ENCODE measurements at regions of chr9 and their contacts with region 1.

Region 1: GRCh38 chr9:110623462-110624025 is 44.0 kb upstream of the SVEP1 start:
- DNase-seq: no peak
- H3K4me3 Mint-ChIP-seq: no peak overlapping the region
- H3K27ac Mint-ChIP-seq: no peak overlapping the region
- H3K4me1 Mint-ChIP-seq: peaks cover 10% of the 10 kb centered on the region
- H3K27me3 Mint-ChIP-seq: peaks cover 7% of the 10 kb centered on the region

Region 2: GRCh38 chr9:109880277-109881169 is 743.0 kb before region 1 on chr9:
- intact Hi-C with region 1: loop called (anchors 10 kb)
- DNase-seq: peak; percentile 20
- H3K4me3 Mint-ChIP-seq: peak overlapping the region; percentile 41
- H3K27ac Mint-ChIP-seq: no peak overlapping the region
- H3K4me1 Mint-ChIP-seq: peaks cover 31% of the 10 kb centered on the region
- H3K27me3 Mint-ChIP-seq: peaks cover 5% of the 10 kb centered on the region

Region 3: GRCh38 chr9:110183208-110184145 is 440.1 kb before region 1 on chr9:
- intact Hi-C with region 1: loop called (anchors 1 kb)
- DNase-seq: peak; percentile 28
- H3K4me3 Mint-ChIP-seq: no peak overlapping the region
- H3K27ac Mint-ChIP-seq: no peak overlapping the region
- H3K4me1 Mint-ChIP-seq: peaks cover 15% of the 10 kb centered on the region
- H3K27me3 Mint-ChIP-seq: no peaks in the 10 kb centered on the region

Region 4: GRCh38 chr9:110427497-110428104 is 195.9 kb before region 1 on chr9:
- intact Hi-C with region 1: loop called (anchors 2 kb)
- DNase-seq: peak; percentile 13
- H3K4me3 Mint-ChIP-seq: no peak overlapping the region
- H3K27ac Mint-ChIP-seq: no peak overlapping the region
- H3K4me1 Mint-ChIP-seq: no peaks in the 10 kb centered on the region
- H3K27me3 Mint-ChIP-seq: no peaks in the 10 kb centered on the region

Region 5: GRCh38 chr9:110452227-110452801 is 171.2 kb before region 1 on chr9:
- intact Hi-C with region 1: loop called (anchors 1 kb)
- DNase-seq: no peak
- H3K4me3 Mint-ChIP-seq: no peak overlapping the region
- H3K27ac Mint-ChIP-seq: no peak overlapping the region
- H3K4me1 Mint-ChIP-seq: no peaks in the 10 kb centered on the region
- H3K27me3 Mint-ChIP-seq: peaks cover 1% of the 10 kb centered on the region

Region 6: GRCh38 chr9:110579034-110579861 is 44.3 kb before region 1 on chr9 and contains the start of gene SVEP1:
- intact Hi-C with region 1: no loop called
- DNase-seq: no peak
- H3K4me3 Mint-ChIP-seq: peak within 1 kb of the TSS; percentile 8
- H3K27ac Mint-ChIP-seq: no peak within 1 kb of the TSS
- H3K4me1 Mint-ChIP-seq: peaks cover 4% of the 10 kb centered on the region
- H3K27me3 Mint-ChIP-seq: peaks cover 44% of the 10 kb centered on the region
- total RNA-seq, gene SVEP1: not detected in 2 replicates

Region 7: DNA sequence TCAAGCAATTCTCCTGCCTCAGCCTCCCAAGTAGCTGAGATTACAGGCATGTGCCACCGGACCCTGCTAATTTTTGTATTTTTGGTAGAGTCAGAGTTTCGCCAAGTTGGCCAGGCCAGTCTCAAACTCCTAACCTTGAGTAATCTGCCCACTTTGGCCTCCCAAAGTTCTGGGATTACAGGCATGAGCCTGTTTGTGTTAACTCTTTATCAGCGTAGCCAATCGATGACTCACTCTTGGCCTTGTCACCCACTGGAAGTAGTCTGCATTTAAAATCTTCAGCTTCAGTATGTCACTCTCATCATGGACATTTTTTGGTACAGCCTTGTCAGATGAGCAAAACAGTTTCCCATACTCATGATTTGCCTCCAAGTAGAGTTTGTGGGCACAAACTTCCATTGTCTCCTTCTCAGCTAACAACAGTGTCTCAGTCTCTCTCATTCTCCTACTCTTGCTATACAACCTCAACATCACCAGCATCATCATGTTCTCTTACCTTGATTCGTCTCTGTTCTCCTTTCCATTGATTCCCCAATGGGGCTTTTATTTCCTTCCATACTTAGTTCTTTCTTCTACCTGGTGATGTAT is 67.5 kb after region 1 on chr9:
- intact Hi-C with region 1: loop called (anchors 1 kb)
- DNase-seq: no peak
- H3K4me3 Mint-ChIP-seq: no peak overlapping the region
- H3K27ac Mint-ChIP-seq: no peak overlapping the region
- H3K4me1 Mint-ChIP-seq: peaks cover 1% of the 10 kb centered on the region
- H3K27me3 Mint-ChIP-seq: no peaks in the 10 kb centered on the region

Region 8: DNA sequence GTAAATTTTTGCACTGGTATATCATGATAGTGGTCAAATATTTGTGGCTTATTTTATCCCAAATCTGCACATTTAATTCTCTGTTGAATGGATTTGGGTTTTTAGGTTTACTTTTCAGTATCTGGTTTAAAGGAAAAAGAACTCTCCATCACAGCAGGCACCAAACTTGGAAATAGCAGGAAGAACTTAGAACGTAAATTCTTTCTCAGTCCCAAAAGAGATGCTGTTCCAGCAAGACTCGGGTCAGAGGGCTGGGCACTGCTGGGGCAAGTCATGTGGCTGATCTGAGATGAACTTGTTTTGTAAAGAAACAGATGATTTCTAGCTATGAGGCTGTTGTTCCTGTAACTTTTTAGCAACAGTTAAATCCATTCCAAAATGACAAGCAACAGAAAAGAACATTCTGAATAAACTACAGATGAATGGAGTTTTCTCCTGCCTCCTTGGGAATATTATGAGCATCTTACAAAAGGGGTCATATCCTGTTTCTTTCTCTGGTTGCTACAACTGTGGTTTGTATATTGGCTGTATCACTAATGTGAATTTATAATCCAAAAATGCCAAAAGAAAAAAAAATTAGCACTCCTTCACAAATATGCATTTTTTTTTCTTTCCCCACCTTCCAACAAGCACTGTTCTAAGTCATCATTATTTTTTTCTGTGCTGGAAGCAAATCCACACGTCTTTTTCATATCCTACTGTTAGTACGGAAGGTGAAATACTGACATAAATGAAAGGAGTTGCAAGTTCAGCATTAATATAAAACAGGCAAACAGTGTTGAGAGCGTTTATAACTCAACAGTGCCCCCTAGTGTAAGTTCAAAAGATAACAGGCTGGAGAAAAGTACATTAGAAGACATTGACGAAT is 675.4 kb after region 1 on chr9:
- intact Hi-C with region 1: loop called (anchors 10 kb)
- DNase-seq: no peak
- H3K4me3 Mint-ChIP-seq: no peak overlapping the region
- H3K27ac Mint-ChIP-seq: no peak overlapping the region
- H3K4me1 Mint-ChIP-seq: no peaks in the 10 kb centered on the region
- H3K27me3 Mint-ChIP-seq: peaks cover 9% of the 10 kb centered on the region